AG04449 (cell line): ENCODE measurements at regions of chr17 and their contacts with region 1.

Region 1: GRCh38 chr17:75632863-75633485 is at the start of gene SMIM5:
- DNase-seq: peak; percentile 36
- H3K4me3 ChIP-seq: no peak within 1 kb of the TSS
- CTCF ChIP-seq: peak; percentile 91

Region 2: GRCh38 chr17:75515496-75516254 is 117.3 kb before region 1 on chr17 and contains the start of gene CASKIN2:
- CTCF ChIA-PET with region 1: interaction called, 12 read pairs
- POLR2A ChIA-PET with region 1: no interaction called
- DNase-seq: peak; percentile 10
- H3K4me3 ChIP-seq: peak within 1 kb of the TSS; percentile 80
- CTCF ChIP-seq: peak; percentile 100

Region 3: DNA sequence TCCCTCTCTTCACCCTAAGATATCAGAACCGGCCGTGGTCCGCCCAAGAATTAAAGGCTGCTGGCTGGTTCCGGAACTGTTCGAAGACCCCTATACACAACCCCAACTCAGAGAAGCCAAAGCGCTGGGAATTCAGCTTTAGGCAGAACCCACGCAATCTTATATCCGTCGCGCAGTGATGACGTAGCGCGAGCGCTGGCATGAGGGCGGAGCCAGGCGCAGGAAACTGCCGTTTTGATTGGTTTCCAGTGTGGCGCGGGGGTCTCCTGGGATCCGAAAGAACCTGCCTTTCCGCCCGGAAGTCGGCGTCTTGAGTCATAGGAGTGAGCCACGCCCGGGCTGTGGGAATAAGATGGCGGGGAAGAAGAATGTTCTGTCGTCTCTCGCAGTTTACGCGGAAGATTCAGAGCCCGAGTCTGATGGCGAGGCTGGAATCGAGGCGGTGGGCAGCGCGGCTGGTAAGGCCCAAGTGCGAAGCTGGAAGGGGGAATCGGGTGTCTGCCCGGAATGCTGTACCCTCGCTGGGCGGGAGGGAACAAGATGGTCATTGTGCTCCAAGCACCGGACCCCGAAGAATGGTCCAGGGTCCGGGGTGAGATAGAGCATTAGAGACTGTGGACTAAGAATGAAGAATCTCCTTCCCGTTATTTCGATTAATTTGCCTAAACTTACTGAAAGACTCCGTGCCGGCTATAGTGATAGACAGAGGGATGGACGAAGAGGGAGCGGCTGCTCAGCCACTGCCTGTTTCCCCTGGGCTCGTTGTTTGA is 34.2 kb after region 1 on chr17 and contains the starts of genes RECQL5 and SAP30BP:
- CTCF ChIA-PET with region 1: interaction called, 746 read pairs
- POLR2A ChIA-PET with region 1: no interaction called
- DNase-seq: peak; percentile 90
- H3K4me3 ChIP-seq: peak within 1 kb of the TSS; percentile 100
- CTCF ChIP-seq: no peak

Region 4: DNA sequence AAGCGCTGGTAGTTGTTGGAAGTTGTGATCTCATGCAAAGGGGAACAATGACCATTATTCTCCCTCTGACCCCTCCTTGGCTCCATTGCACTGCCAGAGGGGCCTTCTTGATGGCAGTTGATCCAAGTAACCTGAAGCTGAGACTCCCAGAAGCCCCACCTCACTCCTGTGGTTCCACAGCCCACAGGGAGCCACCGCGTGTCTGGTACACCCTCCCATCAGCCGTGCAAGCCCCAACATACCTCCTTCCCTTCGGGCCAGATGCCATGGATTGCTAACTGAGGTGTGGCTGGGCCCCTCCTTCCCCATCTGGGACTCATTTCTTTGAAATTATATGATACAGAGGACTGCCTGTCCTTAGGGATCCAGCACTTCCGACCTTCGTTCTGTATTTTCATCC is 52.0 kb after region 1 on chr17:
- CTCF ChIA-PET with region 1: interaction called, 37 read pairs
- POLR2A ChIA-PET with region 1: no interaction called
- DNase-seq: no peak
- H3K4me3 ChIP-seq: no peak overlapping the region
- CTCF ChIP-seq: no peak

Region 5: GRCh38 chr17:75712446-75712845 is 79.5 kb after region 1 on chr17:
- CTCF ChIA-PET with region 1: interaction called, 19 read pairs
- POLR2A ChIA-PET with region 1: no interaction called
- DNase-seq: no peak
- H3K4me3 ChIP-seq: no peak overlapping the region
- CTCF ChIP-seq: no peak

Region 6: DNA sequence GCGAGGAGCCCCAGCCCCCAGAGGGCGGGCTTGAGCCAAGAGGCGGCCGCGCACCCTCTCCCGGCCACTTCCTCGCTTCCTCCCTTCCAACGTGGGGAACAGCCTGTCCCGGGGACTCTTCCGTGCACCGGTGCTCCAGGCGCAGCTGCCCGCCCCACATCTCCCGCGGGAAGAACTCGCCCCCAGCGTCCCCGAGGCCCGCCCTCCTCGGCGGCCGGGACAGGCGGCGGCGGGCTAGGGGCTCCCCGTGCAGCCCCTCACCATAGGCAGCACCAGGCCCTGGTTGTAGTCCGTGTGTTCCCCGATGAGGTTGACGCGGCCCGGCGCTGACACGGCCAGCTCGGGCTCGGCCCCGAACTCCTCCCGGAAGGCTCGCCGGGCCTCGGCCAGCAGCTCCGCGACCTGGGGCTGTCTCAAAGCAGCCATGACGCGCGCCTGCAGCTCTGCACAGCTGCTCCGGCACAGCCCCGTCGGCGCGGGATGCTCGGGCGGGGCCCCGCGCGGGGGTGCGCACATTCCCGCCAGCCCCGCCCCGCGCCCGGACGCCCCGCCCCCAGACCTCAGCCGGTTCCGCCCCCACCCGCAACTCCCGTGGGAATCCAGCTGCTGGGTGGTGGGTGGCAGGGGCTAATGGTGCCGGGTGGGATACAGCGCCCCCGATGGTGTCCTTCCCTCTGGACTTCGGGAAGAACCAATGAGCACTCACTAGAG is 131.9 kb after region 1 on chr17 and contains the start of gene GALK1:
- CTCF ChIA-PET with region 1: interaction called, 1,427 read pairs
- POLR2A ChIA-PET with region 1: no interaction called
- DNase-seq: no peak
- H3K4me3 ChIP-seq: peak within 1 kb of the TSS; percentile 66
- CTCF ChIP-seq: peak; percentile 77

Region 7: DNA sequence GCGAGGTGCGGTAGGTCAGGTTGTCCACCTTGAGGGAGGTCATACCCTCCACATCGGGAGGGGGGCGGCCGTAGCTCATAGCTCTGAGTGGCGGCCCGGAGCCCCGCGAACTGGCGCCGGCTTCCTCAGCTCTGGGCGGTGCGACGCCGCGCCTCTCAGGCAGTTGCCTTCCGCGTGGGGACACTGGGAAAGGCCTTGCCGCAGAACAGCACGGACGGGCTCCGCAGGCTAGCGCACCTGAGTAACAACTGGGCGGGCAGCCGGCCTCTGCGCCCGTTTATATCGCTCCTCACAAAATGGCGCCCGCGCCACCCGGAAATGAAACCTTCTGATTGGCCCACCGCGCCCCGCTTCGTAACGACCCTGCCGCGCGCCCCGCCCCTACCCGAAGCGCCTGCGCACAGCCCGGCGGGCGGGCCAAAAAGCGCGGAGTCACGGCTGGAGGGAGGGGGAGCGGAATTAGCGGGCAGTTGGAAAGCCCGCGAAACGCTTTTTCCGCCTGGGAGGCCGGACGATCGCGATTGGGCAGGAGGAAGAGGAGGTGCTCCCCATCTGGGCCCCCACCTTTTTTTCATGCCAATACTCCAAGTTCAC is 1104.2 kb after region 1 on chr17 and contains the start of gene SRSF2:
- CTCF ChIA-PET with region 1: no interaction called
- POLR2A ChIA-PET with region 1: no interaction called
- DNase-seq: peak; percentile 84
- H3K4me3 ChIP-seq: peak within 1 kb of the TSS; percentile 97
- CTCF ChIP-seq: no peak